ENCODE measurements at regions of chr1 and their contacts with region 1.

Region 1: DNA sequence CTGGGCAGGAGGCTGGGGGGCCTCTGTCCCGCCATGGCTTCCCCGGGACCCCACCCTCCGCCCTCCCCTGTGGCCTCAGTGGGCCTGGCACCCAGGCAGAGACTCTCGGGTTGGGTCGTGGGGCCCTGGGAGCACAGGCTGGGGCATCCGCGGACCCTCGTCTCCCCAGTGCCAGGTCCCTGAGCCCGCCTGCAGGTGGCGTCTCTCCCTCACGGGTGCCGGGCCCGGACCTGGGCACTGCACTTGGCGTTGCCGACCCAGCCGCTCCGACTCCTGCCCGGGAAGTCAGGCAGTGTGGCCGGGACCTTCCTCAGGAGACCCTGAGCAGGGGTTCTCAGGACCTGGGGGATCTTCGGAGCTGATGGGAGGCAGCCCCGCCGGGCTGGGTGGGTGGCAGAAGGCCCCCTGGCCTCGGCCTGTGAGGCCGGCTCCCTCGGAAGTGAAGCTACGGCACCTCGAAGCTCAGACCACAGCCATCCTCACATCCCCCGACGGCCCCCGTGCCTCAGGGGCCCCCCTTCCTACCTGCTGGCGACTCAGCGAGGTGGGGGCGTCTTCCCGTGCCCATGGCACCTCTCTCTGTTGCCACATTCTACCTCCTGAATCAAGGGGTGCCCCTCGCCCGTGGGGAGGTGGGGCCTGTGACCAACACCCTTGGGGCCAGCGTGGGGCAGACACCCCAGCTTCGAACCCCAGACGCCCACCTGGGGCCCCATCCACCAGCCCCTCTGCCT is 6.4 kb upstream of the C1orf159 start:
- DNase-seq: peak; percentile 89
- H3K4me3 Mint-ChIP-seq: no peak overlapping the region
- H3K27ac Mint-ChIP-seq: no peak overlapping the region
- H3K4me1 Mint-ChIP-seq: peaks cover 10% of the 10 kb centered on the region
- H3K27me3 Mint-ChIP-seq: peaks cover 37% of the 10 kb centered on the region

Region 2: GRCh38 chr1:902802-903201 is 219.4 kb before region 1 on chr1:
- CTCF ChIA-PET with region 1: no interaction called
- DNase-seq: no peak
- H3K4me3 Mint-ChIP-seq: no peak overlapping the region
- H3K27ac Mint-ChIP-seq: no peak overlapping the region
- H3K4me1 Mint-ChIP-seq: peaks cover 21% of the 10 kb centered on the region
- H3K27me3 Mint-ChIP-seq: peaks cover 87% of the 10 kb centered on the region

Region 3: DNA sequence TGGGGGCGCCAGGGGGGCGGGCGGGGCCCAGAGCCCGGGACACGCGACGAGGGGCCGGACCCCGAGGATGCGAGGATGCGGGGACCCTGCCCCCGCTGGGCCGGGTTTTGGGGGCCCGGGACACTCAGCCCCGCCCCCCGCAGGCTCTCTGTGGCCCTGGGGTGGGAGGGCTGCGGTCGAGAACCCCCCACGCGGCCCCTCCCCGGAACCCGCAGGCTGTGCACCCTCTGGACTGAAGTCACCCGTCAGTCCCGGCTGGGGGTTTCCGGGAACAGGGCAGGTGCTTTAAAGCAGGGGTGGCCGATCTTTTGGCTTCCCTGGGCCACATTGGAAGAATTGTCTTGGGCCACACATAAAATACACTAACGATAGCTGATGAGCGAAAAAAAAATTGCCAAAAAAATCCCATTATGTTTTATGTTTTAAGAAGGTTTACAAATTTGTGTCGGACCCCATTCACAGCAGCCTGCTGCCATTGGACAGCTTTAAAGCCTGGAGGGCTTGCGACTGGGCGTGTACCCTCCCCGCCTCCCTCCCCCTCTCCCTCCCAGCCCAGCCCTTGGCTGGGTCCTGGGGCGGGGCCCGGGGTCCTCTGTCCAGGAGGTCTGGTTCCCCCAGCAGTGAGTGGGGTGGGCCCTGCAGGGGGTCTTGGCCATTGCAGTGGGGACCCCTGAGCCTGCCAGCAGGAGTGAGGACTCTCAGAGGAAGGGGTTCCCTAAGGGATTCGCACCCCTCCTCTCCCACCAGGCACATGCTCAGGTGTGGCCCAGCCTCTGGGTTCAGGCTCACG is 15.2 kb after region 1 on chr1:
- CTCF ChIA-PET with region 1: no interaction called
- DNase-seq: peak; percentile 82
- H3K4me3 Mint-ChIP-seq: peak overlapping the region; percentile 62
- H3K27ac Mint-ChIP-seq: peak overlapping the region; percentile 85
- H3K4me1 Mint-ChIP-seq: peaks cover 27% of the 10 kb centered on the region
- H3K27me3 Mint-ChIP-seq: peaks cover 13% of the 10 kb centered on the region

Region 4: GRCh38 chr1:1213345-1214265 is 91.4 kb after region 1 on chr1 and contains the start of gene TNFRSF4:
- CTCF ChIA-PET with region 1: interaction called, 14 read pairs
- DNase-seq: peak; percentile 33
- H3K4me3 Mint-ChIP-seq: peak within 1 kb of the TSS; percentile 5
- H3K27ac Mint-ChIP-seq: peak within 1 kb of the TSS; percentile 11
- H3K4me1 Mint-ChIP-seq: peaks cover 36% of the 10 kb centered on the region
- H3K27me3 Mint-ChIP-seq: peaks cover 23% of the 10 kb centered on the region

Region 5: GRCh38 chr1:1231400-1232223 is 109.4 kb after region 1 on chr1 and contains the start of gene SDF4:
- CTCF ChIA-PET with region 1: interaction called, 38 read pairs
- DNase-seq: peak; percentile 98
- H3K4me3 Mint-ChIP-seq: peak within 1 kb of the TSS; percentile 95
- H3K27ac Mint-ChIP-seq: peak within 1 kb of the TSS; percentile 92
- H3K4me1 Mint-ChIP-seq: peaks cover 29% of the 10 kb centered on the region
- H3K27me3 Mint-ChIP-seq: no peaks in the 10 kb centered on the region

Region 6: DNA sequence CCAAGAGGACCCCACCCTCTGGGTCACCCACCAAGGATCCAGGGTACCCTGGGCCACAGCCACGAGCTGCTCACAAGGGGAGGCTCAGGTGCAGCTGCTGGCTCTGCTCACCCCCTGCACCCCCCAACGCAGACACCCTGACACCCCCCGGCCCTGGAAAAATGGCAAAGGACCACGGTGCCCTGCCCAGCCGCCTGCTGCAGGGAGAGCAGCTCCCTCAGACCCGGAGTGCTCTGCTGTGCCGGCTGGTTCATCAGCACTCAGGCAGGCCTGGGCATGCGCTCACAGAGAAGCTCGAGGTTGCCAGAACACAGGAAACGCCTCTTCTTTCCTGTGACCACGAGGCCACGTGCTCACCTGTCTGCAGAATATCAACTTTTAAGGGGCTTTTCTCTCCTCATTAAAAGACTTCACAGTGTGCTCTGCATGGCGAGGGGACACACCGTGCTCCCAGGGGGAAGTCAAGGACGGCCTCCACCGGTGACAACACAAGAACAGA is 128.6 kb after region 1 on chr1:
- CTCF ChIA-PET with region 1: interaction called, 26 read pairs
- DNase-seq: peak; percentile 84
- H3K4me3 Mint-ChIP-seq: peak overlapping the region; percentile 18
- H3K27ac Mint-ChIP-seq: peak overlapping the region; percentile 88
- H3K4me1 Mint-ChIP-seq: peaks cover 19% of the 10 kb centered on the region
- H3K27me3 Mint-ChIP-seq: peaks cover 23% of the 10 kb centered on the region

Region 7: DNA sequence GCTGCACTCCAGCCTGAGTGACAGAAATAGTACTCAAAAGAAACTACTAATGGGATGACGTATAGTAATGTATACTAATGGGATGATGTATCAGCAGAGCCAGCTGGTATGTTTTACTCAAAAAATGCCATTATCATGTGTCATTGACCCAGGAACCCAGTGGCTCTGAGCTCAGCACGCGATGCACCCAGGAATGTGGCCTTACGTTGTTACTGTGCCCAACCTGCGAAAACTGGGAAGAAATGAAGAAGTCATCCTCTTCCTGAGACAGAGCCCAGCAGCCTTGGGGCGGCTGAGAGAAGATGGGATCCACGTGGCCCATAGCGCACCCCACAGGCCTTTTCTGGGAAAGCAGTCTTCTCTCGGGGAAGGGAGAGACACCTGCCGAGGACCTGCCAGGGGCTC is 142.6 kb after region 1 on chr1:
- CTCF ChIA-PET with region 1: interaction called, 17 read pairs
- DNase-seq: no peak
- H3K4me3 Mint-ChIP-seq: no peak overlapping the region
- H3K27ac Mint-ChIP-seq: no peak overlapping the region
- H3K4me1 Mint-ChIP-seq: peaks cover 16% of the 10 kb centered on the region
- H3K27me3 Mint-ChIP-seq: no peaks in the 10 kb centered on the region

Region 8: DNA sequence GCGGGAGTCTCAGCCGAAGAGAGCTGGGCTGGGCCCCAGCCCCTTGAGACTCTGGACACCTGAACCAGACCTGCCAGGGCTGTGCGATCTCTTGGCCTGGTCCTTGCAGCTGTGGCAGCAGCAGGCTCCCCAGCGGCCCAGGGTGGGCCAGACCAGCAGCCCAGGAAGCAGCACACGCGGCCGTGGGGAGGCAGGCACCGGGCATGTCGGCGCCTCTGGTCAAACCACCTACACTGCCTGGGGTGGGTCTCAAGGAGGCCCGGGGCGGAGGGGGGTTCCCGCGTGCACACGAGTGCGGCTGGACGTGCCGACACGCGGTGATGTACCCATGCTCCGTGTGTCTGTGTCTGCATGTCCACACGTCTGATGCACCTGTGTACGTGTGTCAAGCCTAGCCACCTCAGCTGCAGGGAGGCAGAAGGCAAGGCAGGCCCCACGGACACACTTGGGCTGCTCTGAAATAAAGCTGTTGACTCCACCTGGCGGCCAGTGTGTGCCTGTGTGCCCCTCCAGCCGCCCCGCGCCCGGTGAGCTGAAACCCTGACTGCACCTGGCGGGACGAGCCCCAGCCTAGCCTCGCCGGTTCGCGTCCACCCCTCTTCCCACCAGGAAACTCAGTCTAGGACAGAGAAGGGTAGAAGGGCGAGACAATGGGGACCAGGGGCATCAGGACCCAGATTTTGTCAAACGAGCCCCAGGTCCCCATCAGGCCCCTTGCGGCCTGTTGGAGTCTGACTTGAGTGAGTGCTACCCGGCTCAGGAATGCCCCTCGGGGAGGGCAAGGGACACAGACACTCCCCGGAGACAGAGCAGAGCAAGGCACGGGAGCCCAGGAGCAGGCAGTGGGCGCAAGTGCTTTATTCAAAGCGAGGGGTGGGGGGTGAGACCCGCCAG is 169.6 kb after region 1 on chr1:
- CTCF ChIA-PET with region 1: interaction called, 49 read pairs
- DNase-seq: peak; percentile 79
- H3K4me3 Mint-ChIP-seq: no peak overlapping the region
- H3K27ac Mint-ChIP-seq: no peak overlapping the region
- H3K4me1 Mint-ChIP-seq: no peaks in the 10 kb centered on the region
- H3K27me3 Mint-ChIP-seq: no peaks in the 10 kb centered on the region

Measured in activated naive CD4-positive, alpha-beta T cell treated with anti-CD3 and anti-CD28 coated beads, Interleukin-2, amount 10 ng/mL, durations not matched to agents 7 days and 5 days (primary cell).